ENCODE measurements at regions of chr17 and their contacts with region 1.

Region 1: GRCh38 chr17:51015145-51015558 is 105.5 kb downstream of the SPAG9 start:
- DNase-seq: no peak
- H3K4me3 ChIP-seq: no peak overlapping the region
- H3K27ac ChIP-seq: peak overlapping the region; percentile 68
- H3K27me3 ChIP-seq: no peaks in the 10 kb centered on the region
- CTCF ChIP-seq: no peak

Region 2: GRCh38 chr17:51000835-51001638 is 14.1 kb before region 1 on chr17:
- CTCF ChIA-PET with region 1: interaction called, 29 read pairs
- POLR2A ChIA-PET with region 1: no interaction called
- DNase-seq: peak; percentile 45
- H3K4me3 ChIP-seq: no peak overlapping the region
- H3K27ac ChIP-seq: no peak overlapping the region
- H3K27me3 ChIP-seq: no peaks in the 10 kb centered on the region
- CTCF ChIP-seq: peak; percentile 54